ENCODE measurements at regions of chr19 and their contacts with region 1.

Region 1: DNA sequence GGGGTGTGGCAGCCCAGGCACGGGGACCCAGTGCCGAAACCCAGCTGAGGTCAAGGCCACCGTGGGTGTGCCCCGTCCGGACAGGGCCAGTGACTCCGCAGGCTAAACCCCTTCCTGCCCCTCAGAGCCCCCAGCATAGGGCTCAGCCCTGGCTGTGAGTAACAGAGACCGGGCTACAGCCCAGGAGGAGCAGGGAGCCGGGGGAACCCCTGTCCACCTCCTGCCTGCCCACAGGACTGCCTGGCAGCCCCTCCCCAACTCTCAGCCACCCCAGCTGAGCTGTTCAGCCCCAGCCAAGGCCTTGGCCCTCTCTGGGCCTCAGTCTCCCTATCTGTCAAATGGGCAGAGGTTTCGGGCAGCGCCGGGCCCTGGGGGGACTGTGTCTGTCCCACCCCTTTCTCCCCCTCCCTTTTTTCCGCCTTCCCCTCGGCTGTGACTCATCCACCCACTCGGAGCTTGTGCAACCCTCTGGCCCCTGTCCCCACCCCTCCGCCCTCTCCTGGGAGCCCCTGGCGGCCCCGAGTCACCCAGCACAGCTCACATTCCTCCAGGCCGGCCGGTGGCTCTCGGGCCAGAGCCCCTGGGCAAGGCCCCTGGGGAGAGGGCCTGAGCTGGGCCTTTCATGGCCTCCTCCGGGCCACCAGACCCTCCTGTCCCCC is 8.5 kb downstream of the ZBTB7A start:
- DNase-seq: peak; percentile 91 to 97 (median 97)
- H3K4me3 ChIP-seq: peak overlapping the region in 1 of 4 donors; percentile 57
- H3K27ac ChIP-seq: peak overlapping the region; percentile 73 to 98 (median 93)
- H3K4me1 ChIP-seq: peaks cover 61 to 67% of the 10 kb centered on the region in 2 donors
- H3K27me3 ChIP-seq: no peaks in the 10 kb centered on the region
- CTCF ChIP-seq: peak in 2 of 6 experiments; percentile 8 to 24
- POLR2A ChIP-seq: peak in 1 of 2 donors; percentile 87

Region 2: DNA sequence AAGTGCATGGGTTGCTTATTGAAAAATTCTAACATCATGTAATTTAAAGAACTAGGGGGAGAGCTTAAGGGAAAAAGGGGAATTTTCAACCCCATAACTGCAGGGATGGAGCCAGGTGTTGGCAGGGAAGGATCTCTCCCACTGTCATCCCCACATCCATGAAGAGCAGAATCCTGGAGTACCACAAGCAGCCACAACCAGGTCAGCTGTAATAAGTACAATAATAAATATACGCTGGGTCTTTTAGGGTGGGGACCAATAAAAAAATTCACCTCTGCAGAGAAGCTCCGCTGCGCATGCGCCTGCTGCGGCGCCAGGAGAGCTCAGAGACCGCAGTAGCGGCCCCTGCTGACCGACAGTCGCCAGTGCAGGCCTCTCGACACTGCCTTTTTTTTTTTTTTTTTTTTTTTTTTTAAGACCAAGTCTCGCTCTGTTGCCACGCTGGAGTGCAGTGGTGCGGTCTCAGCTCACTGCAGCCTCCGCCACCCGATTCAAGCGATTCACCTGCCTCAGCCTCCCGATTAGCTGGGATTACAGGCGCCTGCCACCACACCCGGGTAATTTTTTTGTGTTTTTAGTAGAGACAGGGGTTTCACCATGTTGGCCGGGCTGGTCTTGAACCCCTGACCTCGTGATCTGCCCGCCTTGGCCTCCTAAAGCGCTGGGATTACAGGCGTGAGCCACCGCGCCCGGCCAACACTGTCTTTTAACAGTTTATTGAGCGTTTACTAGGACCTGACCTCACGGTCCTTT is 70.4 kb before region 1 on chr19:
- intact Hi-C with region 1: no loop called
- DNase-seq: peak; percentile 83 to 94 (median 89)
- H3K4me3 ChIP-seq: peak overlapping the region in 1 of 4 donors; percentile 39
- H3K27ac ChIP-seq: no peak overlapping the region
- H3K4me1 ChIP-seq: peaks cover 19 to 41% of the 10 kb centered on the region in 2 donors
- H3K27me3 ChIP-seq: no peaks in the 10 kb centered on the region
- CTCF ChIP-seq: peak; percentile 72 to 86 (median 82)
- POLR2A ChIP-seq: no peak

Region 3: GRCh38 chr19:4007021-4007835 is 50.9 kb before region 1 on chr19 and contains the start of gene PIAS4:
- intact Hi-C with region 1: loop called (anchors 5 to 10 kb)
- DNase-seq: peak; percentile 94 to 98 (median 96)
- H3K4me3 ChIP-seq: peak within 1 kb of the TSS; percentile 33 to 95 (median 76)
- H3K27ac ChIP-seq: peak within 1 kb of the TSS in 4 of 5 donors; percentile 53 to 89 (median 78)
- H3K4me1 ChIP-seq: peaks cover 31 to 40% of the 10 kb centered on the region in 2 donors
- H3K27me3 ChIP-seq: no peaks in the 10 kb centered on the region
- CTCF ChIP-seq: peak in 1 of 6 experiments; percentile 23
- POLR2A ChIP-seq: peak; percentile 39 to 71
- total RNA-seq, gene PIAS4: 16.6 to 40.7 (median 27.7) TPM

Region 4: GRCh38 chr19:4115050-4115817 is 57.1 kb after region 1 on chr19:
- intact Hi-C with region 1: no loop called
- DNase-seq: peak; percentile 62 to 87 (median 84)
- H3K4me3 ChIP-seq: no peak overlapping the region
- H3K27ac ChIP-seq: peak overlapping the region in 4 of 5 donors; percentile 3 to 78 (median 64)
- H3K4me1 ChIP-seq: peaks cover 8 to 20% of the 10 kb centered on the region in 2 donors
- H3K27me3 ChIP-seq: no peaks in the 10 kb centered on the region
- CTCF ChIP-seq: peak in 3 of 6 experiments; percentile 24 to 31 (median 29)
- POLR2A ChIP-seq: peak in 1 of 2 donors; percentile 38

Measured in adrenal gland (tissue), 19 donors.